ENCODE measurements at regions of chr6 and their contacts with region 1.

Region 1: DNA sequence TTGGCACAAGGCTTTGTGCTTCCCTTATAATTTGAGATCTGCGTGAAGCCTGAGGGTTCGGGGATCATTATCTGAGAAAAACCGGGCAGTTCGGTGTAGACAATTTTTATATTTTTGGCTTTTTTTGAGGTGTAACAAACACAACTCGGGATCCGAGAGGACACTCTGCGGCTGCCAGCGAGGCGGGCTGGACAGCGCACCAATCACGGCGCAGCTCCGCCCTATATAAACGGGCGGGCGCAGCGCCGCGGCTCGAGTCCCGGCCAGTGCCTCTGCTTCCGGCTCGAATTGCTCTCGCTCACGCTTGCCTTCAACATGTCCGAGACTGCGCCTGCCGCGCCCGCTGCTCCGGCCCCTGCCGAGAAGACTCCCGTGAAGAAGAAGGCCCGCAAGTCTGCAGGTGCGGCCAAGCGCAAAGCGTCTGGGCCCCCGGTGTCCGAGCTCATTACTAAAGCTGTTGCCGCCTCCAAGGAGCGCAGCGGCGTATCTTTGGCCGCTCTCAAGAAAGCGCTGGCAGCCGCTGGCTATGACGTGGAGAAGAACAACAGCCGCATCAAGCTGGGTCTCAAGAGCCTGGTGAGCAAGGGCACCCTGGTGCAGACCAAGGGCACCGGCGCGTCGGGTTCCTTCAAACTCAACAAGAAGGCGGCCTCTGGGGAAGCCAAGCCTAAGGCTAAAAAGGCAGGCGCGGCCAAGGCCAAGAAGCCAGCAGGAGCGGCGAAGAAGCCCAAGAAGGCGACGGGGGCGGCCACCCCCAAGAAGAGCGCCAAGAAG is 69.0 kb downstream of the HFE start:
- DNase-seq: peak; percentile 91
- ATAC-seq: peak; percentile 39
- H3K4me3 Mint-ChIP-seq: peak overlapping the region; percentile 86
- H3K27ac Mint-ChIP-seq: peak overlapping the region; percentile 97
- H3K4me1 Mint-ChIP-seq: peaks cover 32% of the 10 kb centered on the region
- H3K27me3 Mint-ChIP-seq: no peaks in the 10 kb centered on the region

Region 2: DNA sequence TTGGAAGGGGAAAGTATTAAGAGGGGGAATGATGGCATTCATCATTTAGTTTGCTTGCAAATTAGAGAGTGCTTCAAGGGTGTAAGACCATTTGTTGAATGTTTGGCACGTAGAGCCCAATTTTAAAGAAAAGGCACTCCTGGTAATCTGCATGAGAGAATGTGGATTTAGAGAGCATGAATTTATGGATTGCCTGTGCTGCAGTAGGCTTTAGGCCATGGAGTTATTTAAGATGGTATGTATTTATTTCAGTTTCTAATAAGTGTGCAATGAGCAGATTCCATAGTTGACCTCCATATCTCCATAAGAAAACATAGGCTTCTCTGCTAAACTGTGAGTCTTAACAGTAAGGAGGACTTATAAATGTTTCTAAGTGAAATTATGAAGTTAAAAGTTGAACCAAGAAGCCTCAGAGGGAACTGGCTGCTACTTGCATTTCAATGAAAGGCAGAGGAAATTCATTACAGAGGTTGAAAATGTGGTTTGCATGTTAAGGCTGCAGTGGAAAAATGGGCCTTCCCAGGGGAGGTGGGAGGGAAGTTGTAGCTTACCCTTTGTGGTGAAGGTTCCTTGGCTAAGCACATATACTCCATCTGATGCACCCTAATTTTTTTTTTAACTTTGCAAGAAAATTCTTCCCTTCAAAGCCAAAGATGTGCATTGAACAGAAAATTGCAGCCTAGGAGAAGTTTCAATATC is 742.9 kb before region 1 on chr6:
- CTCF ChIA-PET with region 1: no interaction called
- POLR2A ChIA-PET with region 1: no interaction called
- intact Hi-C with region 1: no loop called
- DNase-seq: no peak
- ATAC-seq: no peak
- H3K4me3 Mint-ChIP-seq: no peak overlapping the region
- H3K27ac Mint-ChIP-seq: no peak overlapping the region
- H3K4me1 Mint-ChIP-seq: peaks cover 23% of the 10 kb centered on the region
- H3K27me3 Mint-ChIP-seq: no peaks in the 10 kb centered on the region

Region 3: GRCh38 chr6:26031595-26032339 is 124.5 kb before region 1 on chr6:
- CTCF ChIA-PET with region 1: no interaction called
- POLR2A ChIA-PET with region 1: interaction called, 69 read pairs
- intact Hi-C with region 1: loop called (anchors 1 to 2 kb)
- DNase-seq: peak; percentile 92
- ATAC-seq: peak; percentile 69
- H3K4me3 Mint-ChIP-seq: peak overlapping the region; percentile 81
- H3K27ac Mint-ChIP-seq: peak overlapping the region; percentile 98
- H3K4me1 Mint-ChIP-seq: peaks cover 50% of the 10 kb centered on the region
- H3K27me3 Mint-ChIP-seq: no peaks in the 10 kb centered on the region

Region 4: DNA sequence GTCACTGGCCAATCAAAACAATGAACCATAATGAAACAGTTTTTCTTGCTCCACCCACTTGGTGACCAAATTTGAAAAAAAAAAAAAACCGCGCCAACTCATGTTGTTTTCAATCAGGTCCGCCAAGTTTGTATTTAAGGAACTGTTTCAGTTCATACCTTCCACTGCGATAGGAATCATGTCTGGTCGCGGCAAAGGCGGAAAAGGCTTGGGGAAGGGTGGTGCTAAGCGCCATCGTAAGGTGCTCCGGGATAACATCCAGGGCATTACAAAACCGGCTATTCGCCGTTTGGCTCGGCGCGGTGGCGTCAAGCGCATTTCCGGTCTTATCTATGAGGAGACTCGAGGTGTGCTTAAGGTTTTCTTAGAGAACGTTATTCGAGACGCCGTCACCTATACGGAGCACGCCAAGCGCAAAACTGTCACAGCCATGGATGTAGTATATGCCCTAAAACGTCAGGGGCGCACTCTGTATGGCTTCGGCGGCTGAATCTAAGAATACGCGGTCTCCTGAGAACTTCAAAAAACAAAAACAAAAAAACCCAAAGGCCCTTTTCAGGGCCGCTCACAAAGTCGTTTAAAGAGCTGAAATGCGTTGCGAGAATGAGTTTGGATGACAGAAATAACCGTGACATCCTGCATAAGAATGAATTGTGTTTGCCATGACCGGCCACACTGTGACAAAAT is 52.4 kb before region 1 on chr6:
- CTCF ChIA-PET with region 1: interaction called, 6 read pairs
- POLR2A ChIA-PET with region 1: interaction called, 37 read pairs
- intact Hi-C with region 1: loop called (anchors 1 kb)
- DNase-seq: peak; percentile 92
- ATAC-seq: peak; percentile 89
- H3K4me3 Mint-ChIP-seq: peak overlapping the region; percentile 82
- H3K27ac Mint-ChIP-seq: peak overlapping the region; percentile 97
- H3K4me1 Mint-ChIP-seq: peaks cover 16% of the 10 kb centered on the region
- H3K27me3 Mint-ChIP-seq: no peaks in the 10 kb centered on the region

Region 5: GRCh38 chr6:26183581-26184366 is 27.5 kb after region 1 on chr6:
- CTCF ChIA-PET with region 1: interaction called, 8 read pairs
- POLR2A ChIA-PET with region 1: interaction called, 81 read pairs
- intact Hi-C with region 1: loop called (anchors 1 to 2 kb)
- DNase-seq: peak; percentile 82
- ATAC-seq: peak; percentile 80
- H3K4me3 Mint-ChIP-seq: peak overlapping the region; percentile 89
- H3K27ac Mint-ChIP-seq: peak overlapping the region; percentile 92
- H3K4me1 Mint-ChIP-seq: peaks cover 45% of the 10 kb centered on the region
- H3K27me3 Mint-ChIP-seq: no peaks in the 10 kb centered on the region

Region 6: GRCh38 chr6:26234421-26235296 is 78.4 kb after region 1 on chr6:
- CTCF ChIA-PET with region 1: interaction called, 3 read pairs
- POLR2A ChIA-PET with region 1: interaction called, 59 read pairs
- intact Hi-C with region 1: loop called (anchors 1 kb)
- DNase-seq: peak; percentile 81
- ATAC-seq: peak; percentile 73
- H3K4me3 Mint-ChIP-seq: peak overlapping the region; percentile 77
- H3K27ac Mint-ChIP-seq: peak overlapping the region; percentile 100
- H3K4me1 Mint-ChIP-seq: peaks cover 31% of the 10 kb centered on the region
- H3K27me3 Mint-ChIP-seq: peaks cover 2% of the 10 kb centered on the region

Region 7: DNA sequence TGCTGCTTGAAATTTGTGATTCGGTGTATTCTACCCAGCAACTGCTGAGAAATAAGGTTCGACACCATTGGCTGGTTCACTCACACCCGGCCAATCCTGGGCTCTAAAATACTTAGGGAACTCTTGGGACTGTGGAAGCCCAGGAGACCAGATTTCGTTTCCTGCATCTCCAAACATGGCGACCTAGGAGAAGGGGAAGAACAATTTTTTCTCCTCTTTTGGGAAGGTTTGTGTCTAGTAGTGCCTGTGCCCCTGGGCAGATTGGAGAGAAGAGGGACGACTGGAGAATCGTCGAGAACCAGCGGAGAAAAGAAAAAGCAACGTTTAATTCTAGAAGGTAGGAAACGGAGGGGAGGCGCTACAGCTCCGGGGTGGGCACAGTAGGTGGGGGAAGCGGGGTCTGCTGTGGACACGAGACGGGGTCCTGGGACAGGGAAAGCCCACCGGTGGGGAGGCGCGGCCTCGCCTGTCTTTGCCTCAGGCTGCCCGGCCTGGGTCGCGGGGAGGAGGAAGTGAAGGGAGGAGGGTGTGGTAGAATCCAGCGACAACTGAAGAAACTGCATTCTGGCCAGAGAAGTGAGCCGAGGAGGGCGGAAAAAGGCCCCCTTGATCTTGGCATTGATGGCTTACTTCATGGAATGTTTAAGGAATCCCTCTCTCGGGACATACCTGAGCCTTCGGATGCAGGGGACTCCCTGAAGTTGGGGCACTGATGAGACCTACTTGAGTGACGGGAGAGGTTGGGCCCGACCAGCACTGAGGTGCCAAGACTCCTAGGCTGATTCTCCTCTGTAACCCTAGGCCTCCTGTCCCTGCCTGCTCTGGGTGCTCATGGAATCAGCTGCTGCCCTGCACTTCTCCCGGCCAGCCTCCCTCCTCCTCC is 301.8 kb after region 1 on chr6 and contains the start of gene BTN2A1:
- CTCF ChIA-PET with region 1: no interaction called
- POLR2A ChIA-PET with region 1: no interaction called
- intact Hi-C with region 1: no loop called
- DNase-seq: peak; percentile 76
- ATAC-seq: peak; percentile 99
- H3K4me3 Mint-ChIP-seq: peak within 1 kb of the TSS; percentile 87
- H3K27ac Mint-ChIP-seq: peak within 1 kb of the TSS; percentile 97
- H3K4me1 Mint-ChIP-seq: peaks cover 45% of the 10 kb centered on the region
- H3K27me3 Mint-ChIP-seq: no peaks in the 10 kb centered on the region
- total RNA-seq, gene BTN2A1: 17.3 to 17.5 TPM

Region 8: DNA sequence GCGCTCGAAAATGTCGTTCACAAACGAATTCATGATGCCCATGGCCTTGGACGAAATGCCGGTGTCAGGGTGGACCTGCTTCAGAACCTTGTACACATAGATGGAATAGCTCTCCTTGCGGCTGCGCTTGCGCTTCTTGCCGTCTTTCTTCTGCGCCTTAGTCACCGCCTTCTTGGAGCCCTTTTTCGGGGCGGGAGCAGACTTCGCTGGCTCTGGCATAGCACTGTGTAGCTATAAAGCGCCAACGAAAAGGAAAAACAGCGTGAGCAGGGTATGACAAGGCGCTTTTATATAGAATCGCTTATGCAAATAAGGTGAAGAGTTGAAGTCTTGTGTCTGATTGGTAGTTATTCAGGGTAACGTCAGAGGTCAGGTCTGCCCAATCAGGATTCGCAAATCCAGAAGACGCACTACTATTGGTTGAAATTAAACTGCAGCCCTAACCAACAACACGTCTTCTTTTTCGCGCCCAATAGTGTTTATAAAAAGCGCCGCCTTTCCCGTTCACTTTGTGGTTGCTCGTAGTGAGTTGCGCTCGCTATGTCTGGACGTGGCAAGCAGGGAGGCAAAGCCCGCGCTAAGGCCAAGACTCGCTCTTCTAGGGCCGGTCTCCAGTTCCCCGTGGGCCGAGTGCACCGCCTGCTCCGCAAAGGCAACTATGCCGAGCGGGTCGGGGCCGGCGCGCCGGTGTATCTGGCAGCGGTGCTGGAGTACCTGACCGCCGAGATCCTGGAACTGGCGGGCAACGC is 976.4 kb after region 1 on chr6:
- CTCF ChIA-PET with region 1: no interaction called
- POLR2A ChIA-PET with region 1: interaction called, 12 read pairs
- intact Hi-C with region 1: loop called in 1 of 2 experiments (anchors 1 kb)
- DNase-seq: peak; percentile 93
- ATAC-seq: peak; percentile 80
- H3K4me3 Mint-ChIP-seq: no peak overlapping the region
- H3K27ac Mint-ChIP-seq: no peak overlapping the region
- H3K4me1 Mint-ChIP-seq: peaks cover 21% of the 10 kb centered on the region
- H3K27me3 Mint-ChIP-seq: no peaks in the 10 kb centered on the region

Region 9: DNA sequence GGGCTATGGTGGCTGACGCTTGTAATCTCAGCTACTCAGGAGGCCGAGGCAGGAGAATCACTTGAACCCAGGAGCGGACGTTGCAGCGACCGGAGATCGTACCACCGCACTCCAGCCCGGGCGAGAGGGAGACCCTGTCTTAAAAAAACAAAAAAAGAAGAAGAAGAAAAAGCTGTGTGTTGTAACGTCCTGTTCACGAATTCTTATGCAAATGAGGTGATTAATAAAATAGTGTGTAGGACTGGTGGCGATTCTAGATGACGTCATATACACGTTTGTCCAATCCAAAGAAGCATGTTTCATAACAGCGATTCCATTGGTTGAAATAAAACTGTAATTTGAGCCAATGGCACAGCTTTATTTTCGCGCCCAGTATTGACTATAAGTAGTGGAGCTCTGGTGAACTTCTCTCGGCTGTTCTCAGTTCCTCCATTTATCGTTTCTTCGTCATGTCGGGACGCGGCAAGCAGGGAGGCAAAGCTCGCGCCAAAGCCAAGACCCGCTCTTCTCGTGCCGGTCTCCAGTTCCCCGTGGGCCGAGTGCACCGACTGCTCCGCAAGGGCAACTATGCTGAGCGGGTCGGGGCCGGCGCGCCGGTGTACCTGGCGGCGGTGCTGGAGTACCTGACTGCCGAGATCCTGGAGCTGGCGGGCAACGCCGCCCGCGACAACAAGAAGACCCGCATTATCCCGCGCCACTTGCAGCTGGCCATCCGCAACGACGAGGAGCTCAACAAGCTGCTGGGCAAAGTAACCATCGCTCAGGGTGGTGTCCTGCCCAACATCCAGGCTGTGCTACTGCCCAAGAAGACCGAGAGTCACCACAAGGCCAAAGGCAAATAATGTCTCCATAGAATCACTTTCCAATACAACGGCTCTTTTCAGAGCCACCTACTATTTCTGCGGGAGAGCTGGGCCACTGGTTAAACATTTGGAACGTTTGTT is 1708.9 kb after region 1 on chr6:
- CTCF ChIA-PET with region 1: no interaction called
- POLR2A ChIA-PET with region 1: interaction called, 6 read pairs
- intact Hi-C with region 1: loop called in 1 of 2 experiments (anchors 5 kb)
- DNase-seq: peak; percentile 86
- ATAC-seq: peak; percentile 57
- H3K4me3 Mint-ChIP-seq: peak overlapping the region; percentile 94
- H3K27ac Mint-ChIP-seq: peak overlapping the region; percentile 99
- H3K4me1 Mint-ChIP-seq: peaks cover 40% of the 10 kb centered on the region
- H3K27me3 Mint-ChIP-seq: no peaks in the 10 kb centered on the region